ENCODE measurements at regions of chr6 and their contacts with region 1.

Region 1: GRCh38 chr6:70857387-70858077 is 99.3 kb downstream of the B3GAT2 start:
- DNase-seq: no peak
- ATAC-seq: peak; percentile 100
- H3K4me3 Mint-ChIP-seq: peak overlapping the region; percentile 11
- H3K27ac Mint-ChIP-seq: no peak overlapping the region
- H3K4me1 Mint-ChIP-seq: peaks cover 24% of the 10 kb centered on the region
- H3K27me3 Mint-ChIP-seq: no peaks in the 10 kb centered on the region
- CTCF ChIP-seq: no peak

Region 2: GRCh38 chr6:68911811-68912210 is 1945.7 kb before region 1 on chr6:
- CTCF ChIA-PET with region 1: no interaction called
- POLR2A ChIA-PET with region 1: no interaction called
- intact Hi-C with region 1: no loop called
- DNase-seq: no peak
- ATAC-seq: no peak
- H3K4me3 Mint-ChIP-seq: no peak overlapping the region
- H3K27ac Mint-ChIP-seq: no peak overlapping the region
- H3K4me1 Mint-ChIP-seq: no peaks in the 10 kb centered on the region
- H3K27me3 Mint-ChIP-seq: no peaks in the 10 kb centered on the region
- CTCF ChIP-seq: no peak

Region 3: DNA sequence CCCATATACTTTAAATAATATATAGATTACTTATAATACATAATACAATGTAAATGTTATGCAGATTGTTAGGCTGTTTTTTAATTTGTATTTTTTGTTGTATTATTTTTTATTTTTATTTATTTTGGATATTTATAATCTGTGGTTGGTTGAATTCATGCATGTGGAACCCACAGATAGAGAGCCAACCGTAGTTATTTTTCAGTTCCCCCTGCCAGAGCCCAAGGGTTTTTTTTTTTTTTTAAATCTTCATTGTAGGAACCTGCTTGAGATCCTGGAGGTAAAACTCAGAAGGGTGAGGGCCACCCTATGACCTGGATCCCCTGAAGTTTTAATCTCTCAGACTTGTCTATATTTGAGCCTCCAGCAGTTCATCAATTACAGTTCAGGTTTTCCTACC is 33.9 kb before region 1 on chr6:
- CTCF ChIA-PET with region 1: no interaction called
- POLR2A ChIA-PET with region 1: no interaction called
- intact Hi-C with region 1: loop called (anchors 5 kb)
- DNase-seq: no peak
- ATAC-seq: no peak
- H3K4me3 Mint-ChIP-seq: no peak overlapping the region
- H3K27ac Mint-ChIP-seq: no peak overlapping the region
- H3K4me1 Mint-ChIP-seq: peaks cover 7% of the 10 kb centered on the region
- H3K27me3 Mint-ChIP-seq: no peaks in the 10 kb centered on the region
- CTCF ChIP-seq: no peak

Region 4: DNA sequence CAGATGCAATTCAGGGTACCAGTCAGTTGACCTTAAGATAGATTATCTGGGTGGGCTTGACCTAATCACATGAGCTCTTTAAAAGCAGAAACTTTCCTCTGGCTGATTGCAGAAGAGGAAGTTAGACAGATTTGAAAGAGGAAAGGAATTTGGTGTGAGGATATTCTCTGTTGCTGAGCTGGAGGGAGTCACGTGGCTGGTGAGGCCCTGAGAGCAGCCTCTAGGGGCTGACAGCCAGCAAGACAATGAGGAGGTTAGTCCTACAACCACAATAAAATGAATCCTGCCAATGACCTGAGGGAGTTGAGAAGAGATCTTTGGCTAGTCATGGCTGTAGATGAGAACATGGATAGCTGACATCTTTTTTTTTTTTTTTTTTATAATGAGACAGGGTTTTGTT is 186.4 kb after region 1 on chr6:
- CTCF ChIA-PET with region 1: no interaction called
- POLR2A ChIA-PET with region 1: no interaction called
- intact Hi-C with region 1: no loop called
- DNase-seq: no peak
- ATAC-seq: no peak
- H3K4me3 Mint-ChIP-seq: no peak overlapping the region
- H3K27ac Mint-ChIP-seq: no peak overlapping the region
- H3K4me1 Mint-ChIP-seq: no peaks in the 10 kb centered on the region
- H3K27me3 Mint-ChIP-seq: no peaks in the 10 kb centered on the region
- CTCF ChIP-seq: no peak

Measured in activated B cell treated with CpG ODN at 0.5 μM for 24 hours (primary cell).